HEK293T (cell line): ENCODE measurements at regions of chr10 and their contacts with region 1.

Region 1: DNA sequence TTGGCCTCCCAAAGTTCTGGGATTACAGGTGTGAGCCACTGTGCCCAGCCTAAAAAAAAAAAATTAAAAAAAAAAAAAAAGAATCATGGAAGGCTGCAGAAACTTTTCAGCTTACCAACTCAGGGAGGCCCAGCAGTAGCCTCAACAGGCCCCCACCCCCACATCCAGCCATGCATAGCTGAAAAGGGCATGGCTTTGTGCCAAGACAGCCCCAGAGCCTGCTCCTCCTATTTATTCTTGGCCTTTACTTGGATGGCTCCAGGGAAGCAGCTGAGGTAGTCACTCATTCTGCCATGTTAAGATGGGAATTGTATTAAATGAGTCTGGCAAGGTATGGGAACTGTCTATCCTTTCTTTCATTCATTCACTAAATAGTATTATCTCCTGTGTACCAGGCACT is 13.7 kb upstream of the CNNM2 start:
- DNase-seq: no peak

Region 2: GRCh38 chr10:102837230-102837721 is 67.1 kb before region 1 on chr10 and contains the start of gene CYP17A1:
- CTCF ChIA-PET with region 1: interaction called, 17 read pairs
- POLR2A ChIA-PET with region 1: no interaction called
- DNase-seq: no peak